ENCODE measurements at regions of chr9 and their contacts with region 1.

Region 1: GRCh38 chr9:33076358-33077004 is at the start of gene SMU1:
- DNase-seq: peak; percentile 91
- ATAC-seq: peak; percentile 97
- H3K4me3 Mint-ChIP-seq: peak within 1 kb of the TSS; percentile 100
- H3K27ac Mint-ChIP-seq: peak within 1 kb of the TSS; percentile 100
- H3K4me1 Mint-ChIP-seq: peaks cover 21% of the 10 kb centered on the region
- H3K27me3 Mint-ChIP-seq: no peaks in the 10 kb centered on the region
- total RNA-seq, gene SMU1: 22.2 to 22.9 TPM

Region 2: GRCh38 chr9:33167046-33167808 is 90.7 kb after region 1 on chr9 and contains the start of gene B4GALT1:
- POLR2A ChIA-PET with region 1: interaction called, 11 read pairs
- DNase-seq: peak; percentile 97
- ATAC-seq: peak; percentile 86
- H3K4me3 Mint-ChIP-seq: peak within 1 kb of the TSS; percentile 98
- H3K27ac Mint-ChIP-seq: peak within 1 kb of the TSS; percentile 100
- H3K4me1 Mint-ChIP-seq: peaks cover 45% of the 10 kb centered on the region
- H3K27me3 Mint-ChIP-seq: no peaks in the 10 kb centered on the region
- total RNA-seq, gene B4GALT1: 34.6 to 35.7 TPM

Measured in activated naive CD8-positive, alpha-beta T cell treated with anti-CD3 and anti-CD28 coated beads, Interleukin-2, amount 10 ng/mL, durations not matched to agents 7 days and 5 days (primary cell).